K562 (cell line): ENCODE measurements at regions of chr13 and their contacts with region 1.

Region 1: DNA sequence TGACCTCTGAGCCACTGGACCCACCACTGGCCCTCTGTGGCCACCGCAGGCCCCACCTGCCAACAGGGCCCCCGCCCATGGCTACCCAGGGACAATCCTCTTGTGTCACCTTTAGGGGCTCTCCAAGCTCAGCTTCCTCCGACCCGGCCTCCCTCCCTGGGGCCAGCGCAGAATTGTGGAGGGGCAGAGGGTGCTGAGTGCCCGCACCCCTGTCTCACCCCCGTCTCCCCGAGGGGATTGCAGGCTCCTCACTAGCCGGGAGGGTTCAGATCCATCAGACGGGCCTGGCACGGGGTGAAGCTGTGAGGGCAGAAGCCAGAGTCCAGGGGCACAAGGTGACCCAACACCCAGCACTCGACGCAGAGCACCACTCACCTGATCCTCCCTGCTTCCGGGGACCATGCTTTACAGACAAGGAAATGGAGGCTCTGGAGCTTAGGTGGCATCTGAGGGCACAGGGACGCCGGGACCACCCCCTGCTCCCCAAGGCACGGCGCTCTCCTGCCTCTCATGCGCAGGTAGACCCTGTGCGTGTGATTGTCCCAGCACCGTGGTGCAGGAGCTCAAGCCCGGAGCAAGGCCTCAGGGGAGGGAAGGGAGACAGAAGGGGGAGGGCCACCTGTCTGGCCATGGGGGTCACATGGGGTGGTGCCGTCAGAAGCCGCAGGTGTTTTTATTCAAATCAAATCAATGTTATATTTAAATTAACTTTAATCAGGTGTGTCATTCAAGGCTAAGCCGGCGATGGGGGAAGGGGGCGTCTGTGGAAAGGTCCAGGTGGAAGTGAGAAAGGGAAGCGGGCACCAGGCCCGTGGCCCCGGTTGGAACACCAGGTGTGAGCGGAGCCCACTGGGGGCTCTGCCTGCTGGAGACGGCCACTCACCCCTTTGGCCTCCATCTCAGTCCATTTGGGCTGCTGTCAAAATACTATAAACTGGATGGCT is 21.6 kb upstream of the SPACA7 start:
- DNase-seq: no peak
- ATAC-seq: no peak
- H3K4me3 ChIP-seq: no peak overlapping the region
- H3K27ac ChIP-seq: no peak overlapping the region
- H3K4me1 ChIP-seq: no peaks in the 10 kb centered on the region
- H3K27me3 ChIP-seq: peaks cover 0 to 14% of the 10 kb centered on the region in 2 experiments; a peak in 1 of 5 replicates
- CTCF ChIP-seq: no peak
- EP300 ChIP-seq: no peak
- POLR2A ChIP-seq: no peak
- RAD21 ChIP-seq: no peak

Region 2: DNA sequence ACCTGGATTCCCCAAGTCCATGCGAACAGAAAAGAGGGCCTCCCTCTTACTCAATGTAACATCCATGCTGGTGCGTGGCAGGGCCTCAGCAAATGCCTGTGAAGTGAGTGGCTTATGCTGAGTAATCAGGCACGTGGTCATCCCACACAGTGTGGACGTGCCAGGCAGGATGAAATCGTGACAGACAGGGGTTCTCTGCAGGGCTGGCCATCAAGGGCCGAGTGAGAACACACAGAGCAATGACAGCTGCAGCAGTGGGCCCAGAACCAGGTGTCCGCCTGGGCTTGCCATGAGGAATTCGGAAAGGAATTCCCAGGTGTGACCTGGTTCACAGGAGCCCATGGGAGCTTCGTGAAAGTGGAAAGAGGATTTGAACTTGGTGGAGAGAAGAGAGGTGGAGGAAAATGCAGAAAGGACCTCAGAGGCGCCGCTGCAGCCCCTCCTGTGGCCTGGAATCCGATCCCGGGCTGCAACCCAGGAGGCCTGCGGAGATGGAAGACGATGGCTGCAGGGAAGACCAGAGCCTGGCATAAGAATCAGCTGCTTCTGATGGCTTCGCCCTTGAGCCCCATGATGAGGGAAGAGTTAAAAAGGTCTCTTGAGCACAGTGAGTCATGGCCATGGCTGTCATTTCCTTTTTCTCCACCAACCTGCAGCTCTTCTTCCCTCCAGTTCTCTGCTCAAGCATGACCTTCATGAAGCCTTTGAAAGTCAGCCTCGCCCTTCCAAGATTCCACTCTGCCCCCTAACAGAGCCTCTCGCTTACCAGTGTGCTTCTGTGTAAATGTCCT is 322.2 kb before region 1 on chr13:
- CTCF ChIA-PET with region 1: no interaction called
- POLR2A ChIA-PET with region 1: no interaction called
- in situ Hi-C with region 1: no loop called
- intact Hi-C with region 1: loop called (anchors 5 kb)
- DNase-seq: no peak
- ATAC-seq: no peak
- H3K4me3 ChIP-seq: no peak overlapping the region
- H3K27ac ChIP-seq: no peak overlapping the region
- H3K4me1 ChIP-seq: no peaks in the 10 kb centered on the region
- H3K27me3 ChIP-seq: peaks cover 0 to 20% of the 10 kb centered on the region in 2 experiments; a peak in 2 of 5 replicates
- CTCF ChIP-seq: no peak
- EP300 ChIP-seq: no peak
- POLR2A ChIP-seq: no peak
- RAD21 ChIP-seq: no peak